HepG2 (cell line): ENCODE measurements at regions of chr13 and their contacts with region 1.

Region 1: DNA sequence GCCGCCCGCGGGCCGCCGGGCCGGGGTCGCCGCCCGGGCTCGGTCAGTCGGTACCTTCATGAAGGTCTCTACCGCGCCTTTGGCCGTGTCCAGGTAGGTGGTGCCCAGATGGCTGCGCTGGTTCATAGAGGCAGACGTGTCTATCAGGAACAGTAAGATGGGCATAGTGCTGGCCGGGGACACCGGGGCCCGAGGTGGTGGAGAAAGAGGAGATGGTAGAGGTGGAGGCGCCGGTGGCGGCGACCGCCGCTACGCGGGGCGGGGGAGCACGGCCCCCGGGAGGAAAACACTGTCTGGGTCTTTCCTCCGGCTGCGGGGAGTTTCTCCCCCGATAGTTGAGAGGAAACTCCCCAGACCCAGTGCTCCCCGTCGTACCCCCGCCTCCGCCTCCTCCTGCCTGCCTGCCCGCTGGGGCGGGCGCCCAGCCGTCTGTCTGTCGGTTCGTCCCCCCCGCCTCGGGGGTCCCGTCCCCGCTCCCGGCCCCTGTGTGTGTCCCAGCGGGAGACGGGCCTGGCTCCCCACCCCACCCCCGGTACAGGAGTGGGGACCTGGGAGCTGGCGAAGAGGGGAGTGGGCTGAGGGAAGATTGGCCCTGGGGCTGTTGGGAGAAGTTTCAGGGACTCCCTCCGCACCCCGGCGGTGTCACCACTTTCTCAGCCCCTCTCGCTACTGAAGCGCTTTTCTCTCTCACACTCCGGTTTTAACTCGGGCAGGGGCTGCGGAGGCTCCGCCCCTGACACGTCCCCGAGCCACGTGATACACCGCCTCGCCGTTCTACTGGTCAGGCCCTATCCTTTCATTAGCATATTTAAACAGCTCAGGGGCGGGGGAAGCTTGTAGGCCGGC is at the start of gene INTS6:
- DNase-seq: peak; percentile 98
- ATAC-seq: peak; percentile 75
- H3K4me3 ChIP-seq: peak within 1 kb of the TSS; percentile 93 to 99 (median 98)
- H3K27ac ChIP-seq: peak within 1 kb of the TSS; percentile 95
- H3K4me1 ChIP-seq: peaks cover 41% of the 10 kb centered on the region
- H3K27me3 ChIP-seq: no peaks in the 10 kb centered on the region; a peak in 1 of 5 replicates
- CTCF ChIP-seq: no peak
- EP300 ChIP-seq: no peak
- POLR2A ChIP-seq: peak; percentile 99 to 100
- RAD21 ChIP-seq: peak; percentile 57
- total RNA-seq, gene INTS6: 38.4 and 40.3 TPM in 2 replicates

Region 2: DNA sequence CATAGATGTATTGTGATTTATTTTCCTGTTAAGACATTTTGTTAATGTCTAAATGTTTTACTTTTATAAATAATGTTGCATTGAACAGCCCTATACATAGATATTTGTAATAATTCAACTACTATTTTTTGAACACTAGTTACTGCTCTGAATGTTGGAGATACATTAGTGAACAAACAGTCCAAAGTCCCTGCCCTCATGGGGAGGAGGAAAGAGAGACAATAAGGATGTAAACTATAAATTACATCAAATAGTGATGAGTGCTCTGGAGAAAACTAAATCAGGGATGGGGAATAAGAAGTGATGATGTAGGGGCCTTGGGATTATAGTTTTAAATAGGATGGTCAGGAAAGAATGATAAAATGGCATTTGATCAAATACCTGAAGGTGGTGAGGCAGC is 12.5 kb after region 1 on chr13:
- CTCF ChIA-PET with region 1: no interaction called
- POLR2A ChIA-PET with region 1: interaction called, 35 read pairs
- in situ Hi-C with region 1: no loop called
- intact Hi-C with region 1: no loop called
- DNase-seq: peak; percentile 41
- ATAC-seq: peak; percentile 66
- H3K4me3 ChIP-seq: no peak overlapping the region
- H3K27ac ChIP-seq: no peak overlapping the region
- H3K4me1 ChIP-seq: peaks cover 18% of the 10 kb centered on the region
- H3K27me3 ChIP-seq: no peaks in the 10 kb centered on the region; a peak in 1 of 5 replicates
- CTCF ChIP-seq: no peak
- EP300 ChIP-seq: no peak
- POLR2A ChIP-seq: no peak
- RAD21 ChIP-seq: no peak

Region 3: GRCh38 chr13:51523082-51523518 is 70.5 kb after region 1 on chr13:
- CTCF ChIA-PET with region 1: no interaction called
- POLR2A ChIA-PET with region 1: interaction called, 43 read pairs
- in situ Hi-C with region 1: loop called (anchors 5 kb)
- intact Hi-C with region 1: loop called (anchors 5 kb)
- DNase-seq: peak; percentile 53
- ATAC-seq: peak; percentile 19
- H3K4me3 ChIP-seq: no peak overlapping the region
- H3K27ac ChIP-seq: peak overlapping the region; percentile 73
- H3K4me1 ChIP-seq: peaks cover 84% of the 10 kb centered on the region
- H3K27me3 ChIP-seq: no peaks in the 10 kb centered on the region
- CTCF ChIP-seq: no peak
- EP300 ChIP-seq: no peak
- POLR2A ChIP-seq: no peak
- RAD21 ChIP-seq: no peak

Region 4: GRCh38 chr13:51583875-51584730 is 131.5 kb after region 1 on chr13 and contains the start of gene WDFY2:
- CTCF ChIA-PET with region 1: no interaction called
- POLR2A ChIA-PET with region 1: interaction called, 53 read pairs
- in situ Hi-C with region 1: loop called (anchors 10 kb)
- intact Hi-C with region 1: loop called (anchors 1 kb)
- DNase-seq: peak; percentile 99
- ATAC-seq: peak; percentile 92
- H3K4me3 ChIP-seq: peak within 1 kb of the TSS; percentile 82 to 98 (median 90)
- H3K27ac ChIP-seq: peak within 1 kb of the TSS; percentile 94
- H3K4me1 ChIP-seq: peaks cover 65% of the 10 kb centered on the region
- H3K27me3 ChIP-seq: no peaks in the 10 kb centered on the region; a peak in 1 of 5 replicates
- CTCF ChIP-seq: peak; percentile 64
- EP300 ChIP-seq: 0 out of 4 replicates have a peak, but pooled peaks of 1 of the 2 experiments have one; percentile 9
- POLR2A ChIP-seq: peak; percentile 65 to 89; a peak in 3 of 4 replicates
- RAD21 ChIP-seq: peak; percentile 46; the same call in 1 of the 2 replicates
- total RNA-seq, gene WDFY2: 16.4 and 22.6 TPM in 2 replicates

Region 5: DNA sequence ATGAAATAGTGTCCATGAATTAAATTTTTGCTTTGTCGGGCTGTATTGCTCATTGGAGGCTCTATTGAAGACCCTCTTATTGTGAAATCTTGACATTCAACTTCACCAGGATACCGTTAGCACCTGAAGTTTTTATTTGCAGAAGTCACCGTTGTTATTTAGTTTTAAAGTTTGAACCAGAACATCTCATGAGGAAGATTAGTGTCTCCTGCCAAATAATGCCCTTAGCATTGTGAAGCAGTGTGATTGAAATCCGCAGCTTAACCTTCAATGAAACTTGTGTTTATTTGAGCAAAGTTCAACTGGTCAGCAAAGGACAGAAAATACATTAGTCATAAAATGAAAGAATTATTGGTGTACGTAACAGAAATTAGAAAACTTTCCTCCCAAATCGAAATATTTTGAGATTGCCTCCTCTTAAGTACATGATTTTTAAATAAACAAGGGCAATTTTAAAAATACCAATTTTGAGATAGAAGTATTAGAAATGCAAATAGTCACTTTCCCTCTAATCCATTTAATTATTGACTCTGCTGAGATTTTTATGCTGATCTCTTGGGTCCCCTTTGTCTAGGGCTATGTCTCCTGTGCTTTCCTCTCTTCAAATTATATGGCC is 216.1 kb after region 1 on chr13:
- CTCF ChIA-PET with region 1: no interaction called
- POLR2A ChIA-PET with region 1: interaction called, 14 read pairs
- in situ Hi-C with region 1: no loop called
- intact Hi-C with region 1: no loop called
- DNase-seq: peak; percentile 80
- ATAC-seq: peak; percentile 72
- H3K4me3 ChIP-seq: peak overlapping the region in 2 of 3 experiments; percentile 1 to 13; a peak in 1 of 6 replicates
- H3K27ac ChIP-seq: peak overlapping the region; percentile 71
- H3K4me1 ChIP-seq: peaks cover 95% of the 10 kb centered on the region
- H3K27me3 ChIP-seq: no peaks in the 10 kb centered on the region
- CTCF ChIP-seq: no peak
- EP300 ChIP-seq: peak in 1 of 2 experiments; percentile 85; a peak in 2 of 4 replicates
- POLR2A ChIP-seq: no peak
- RAD21 ChIP-seq: no peak

Region 6: GRCh38 chr13:51764184-51765141 is 311.9 kb after region 1 on chr13:
- CTCF ChIA-PET with region 1: no interaction called
- POLR2A ChIA-PET with region 1: interaction called, 34 read pairs
- in situ Hi-C with region 1: no loop called
- intact Hi-C with region 1: no loop called
- DNase-seq: peak; percentile 92
- ATAC-seq: peak; percentile 92
- H3K4me3 ChIP-seq: peak overlapping the region in 1 of 3 experiments; percentile 26; a peak in 2 of 6 replicates
- H3K27ac ChIP-seq: peak overlapping the region; percentile 63
- H3K4me1 ChIP-seq: peaks cover 26% of the 10 kb centered on the region
- H3K27me3 ChIP-seq: no peaks in the 10 kb centered on the region
- CTCF ChIP-seq: no peak
- EP300 ChIP-seq: peak in 1 of 2 experiments; percentile 58; a peak in 2 of 4 replicates
- POLR2A ChIP-seq: peak in 1 of 2 experiments; percentile 40; a peak in 1 of 4 replicates
- RAD21 ChIP-seq: peak; percentile 50; the same call in 1 of the 2 replicates

Region 7: DNA sequence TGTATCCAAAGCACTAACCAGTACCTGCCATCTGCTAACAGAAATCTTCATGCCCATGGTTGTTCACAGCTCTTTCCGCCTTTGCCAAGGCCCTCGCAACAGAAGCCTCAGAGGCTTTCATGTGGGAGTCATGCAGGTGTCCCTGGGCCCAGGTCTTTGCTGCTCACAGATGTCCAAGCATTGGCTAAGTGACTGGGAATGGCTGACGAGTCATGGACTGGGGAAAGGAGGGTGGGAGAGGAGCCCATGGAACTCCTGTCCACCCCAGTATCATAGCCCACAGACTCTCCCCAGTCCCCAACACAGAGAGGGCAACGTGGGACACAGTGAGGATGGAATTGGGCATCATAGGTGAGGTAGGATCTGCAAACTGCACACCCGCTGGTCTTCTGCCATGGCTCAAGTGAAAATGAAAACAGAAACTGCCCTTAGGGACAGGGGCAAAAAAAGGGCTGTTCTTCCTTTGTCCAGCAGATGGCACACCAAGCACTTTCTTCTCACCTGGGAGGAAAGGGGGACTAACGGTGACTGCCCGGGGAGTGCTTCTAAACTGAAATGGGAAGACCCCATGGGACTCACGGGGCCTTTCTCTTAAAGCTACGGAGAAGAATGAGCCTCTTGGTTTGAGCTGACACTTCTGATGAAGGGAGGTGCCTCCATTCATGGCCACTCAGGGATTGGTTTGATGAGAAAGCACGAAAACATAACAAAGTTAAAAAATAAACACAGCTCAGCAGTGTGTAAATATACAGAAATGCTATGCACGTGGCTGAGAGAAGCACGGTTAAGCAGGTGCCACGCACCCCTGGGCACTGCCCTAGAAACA is 362.5 kb after region 1 on chr13:
- CTCF ChIA-PET with region 1: no interaction called
- POLR2A ChIA-PET with region 1: interaction called, 10 read pairs
- in situ Hi-C with region 1: no loop called
- intact Hi-C with region 1: no loop called
- DNase-seq: peak; percentile 63
- ATAC-seq: peak; percentile 94
- H3K4me3 ChIP-seq: peak overlapping the region in 2 of 3 experiments; percentile 43 to 53; a peak in 5 of 6 replicates
- H3K27ac ChIP-seq: no peak overlapping the region
- H3K4me1 ChIP-seq: peaks cover 14% of the 10 kb centered on the region
- H3K27me3 ChIP-seq: no peaks in the 10 kb centered on the region
- CTCF ChIP-seq: peak; percentile 88
- EP300 ChIP-seq: no peak
- POLR2A ChIP-seq: no peak
- RAD21 ChIP-seq: peak; percentile 71